ENCODE measurements at regions of chr10 and their contacts with region 1.

Region 1: DNA sequence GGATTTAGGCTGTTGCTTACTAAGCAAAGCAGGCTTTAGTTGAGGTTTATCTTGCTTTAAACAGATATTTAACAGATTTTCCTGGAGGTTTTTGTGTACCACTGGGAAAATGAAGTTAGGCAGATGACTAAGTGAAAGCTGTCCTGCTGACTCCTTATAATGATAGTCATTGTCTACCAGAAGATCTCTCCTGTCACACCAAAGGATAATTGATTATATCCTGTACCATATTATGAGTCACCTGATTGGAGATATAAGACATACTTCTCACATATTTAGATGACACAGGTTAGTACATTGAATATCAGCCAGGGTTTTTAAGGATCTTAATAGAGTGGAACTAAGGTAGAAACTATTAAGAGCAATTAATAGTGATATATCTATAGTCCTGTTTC is 68.4 kb downstream of the PTEN start:
- DNase-seq: no peak
- ATAC-seq: no peak
- H3K4me3 ChIP-seq: no peak overlapping the region
- H3K4me3 Mint-ChIP-seq: no peak overlapping the region
- H3K27ac ChIP-seq: no peak overlapping the region
- H3K27ac Mint-ChIP-seq: no peak overlapping the region
- H3K4me1 ChIP-seq: peaks cover 8 to 12% of the 10 kb centered on the region in 2 donors
- H3K4me1 Mint-ChIP-seq: peaks cover 26 to 83% (median 74%) of the 10 kb centered on the region in 7 donors
- H3K27me3 ChIP-seq: no peaks in the 10 kb centered on the region
- H3K27me3 Mint-ChIP-seq: no peaks in the 10 kb centered on the region

Region 2: GRCh38 chr10:87794285-87794684 is 137.5 kb before region 1 on chr10:
- CTCF ChIA-PET with region 1: no interaction called
- POLR2A ChIA-PET with region 1: no interaction called
- intact Hi-C with region 1: no loop called
- DNase-seq: no peak
- ATAC-seq: no peak
- H3K4me3 ChIP-seq: no peak overlapping the region
- H3K4me3 Mint-ChIP-seq: no peak overlapping the region
- H3K27ac ChIP-seq: no peak overlapping the region
- H3K27ac Mint-ChIP-seq: peak overlapping the region in 8 of 9 donors; percentile 32 to 77 (median 65)
- H3K4me1 ChIP-seq: peaks cover 0 to 15% of the 10 kb centered on the region in 2 donors
- H3K4me1 Mint-ChIP-seq: peaks cover 18 to 74% (median 62%) of the 10 kb centered on the region in 7 donors
- H3K27me3 ChIP-seq: no peaks in the 10 kb centered on the region
- H3K27me3 Mint-ChIP-seq: no peaks in the 10 kb centered on the region

Region 3: DNA sequence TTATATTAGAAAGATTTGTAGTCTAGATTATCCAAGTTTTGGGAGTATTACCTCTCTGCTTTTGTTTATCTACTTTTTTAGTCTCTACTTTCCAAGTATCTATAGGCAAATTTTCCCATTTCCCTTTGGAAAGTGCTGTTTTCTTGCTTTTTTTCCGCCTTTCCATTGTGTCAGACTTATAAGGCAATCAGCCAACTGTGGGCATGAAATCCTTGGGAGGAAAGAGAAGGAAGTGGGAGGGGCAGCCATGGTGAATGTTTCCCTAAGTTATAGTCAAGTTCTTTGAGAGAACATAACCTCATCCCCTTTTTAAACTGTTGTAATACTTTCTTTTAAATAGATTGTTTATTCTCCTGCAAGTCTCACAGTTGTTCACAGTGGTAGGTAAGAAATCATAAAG is 15.8 kb before region 1 on chr10:
- CTCF ChIA-PET with region 1: no interaction called
- POLR2A ChIA-PET with region 1: interaction called, 3 read pairs
- intact Hi-C with region 1: loop called in 1 of 2 experiments (anchors 1 kb)
- DNase-seq: no peak
- ATAC-seq: no peak
- H3K4me3 ChIP-seq: no peak overlapping the region
- H3K4me3 Mint-ChIP-seq: peak overlapping the region in 6 of 10 donors; percentile 6 to 68 (median 52)
- H3K27ac ChIP-seq: no peak overlapping the region
- H3K27ac Mint-ChIP-seq: peak overlapping the region in 2 of 9 donors; percentile 7 to 84
- H3K4me1 ChIP-seq: peaks cover 14 to 25% of the 10 kb centered on the region in 2 donors
- H3K4me1 Mint-ChIP-seq: peaks cover 35 to 74% (median 64%) of the 10 kb centered on the region in 7 donors
- H3K27me3 ChIP-seq: no peaks in the 10 kb centered on the region
- H3K27me3 Mint-ChIP-seq: no peaks in the 10 kb centered on the region

Region 4: GRCh38 chr10:87942884-87943527 is 11.2 kb after region 1 on chr10:
- CTCF ChIA-PET with region 1: no interaction called
- POLR2A ChIA-PET with region 1: no interaction called
- intact Hi-C with region 1: loop called in 1 of 2 experiments (anchors 1 kb)
- DNase-seq: no peak
- ATAC-seq: no peak
- H3K4me3 ChIP-seq: no peak overlapping the region
- H3K4me3 Mint-ChIP-seq: no peak overlapping the region
- H3K27ac ChIP-seq: no peak overlapping the region
- H3K27ac Mint-ChIP-seq: no peak overlapping the region
- H3K4me1 ChIP-seq: no peaks in the 10 kb centered on the region
- H3K4me1 Mint-ChIP-seq: peaks cover 4 to 50% (median 40%) of the 10 kb centered on the region in 7 donors
- H3K27me3 ChIP-seq: no peaks in the 10 kb centered on the region
- H3K27me3 Mint-ChIP-seq: no peaks in the 10 kb centered on the region

Region 5: DNA sequence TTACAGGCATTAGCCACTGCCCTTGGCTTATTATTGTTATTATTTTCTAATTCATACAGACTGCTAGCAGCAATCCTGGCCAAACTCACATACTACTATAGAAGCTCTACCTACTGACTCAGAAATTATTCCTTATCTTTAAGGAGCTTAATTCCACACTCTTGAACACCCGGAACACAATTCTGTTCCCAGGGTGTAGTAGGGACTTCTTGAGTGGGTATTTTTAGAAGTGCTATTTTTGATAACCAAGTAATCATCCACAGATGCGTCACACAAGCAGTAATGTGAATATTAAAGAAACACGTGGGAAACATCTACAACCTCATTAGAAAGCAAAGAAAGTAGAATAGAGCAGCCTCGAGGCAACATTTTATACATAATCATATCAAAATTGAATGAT is 80.8 kb after region 1 on chr10:
- CTCF ChIA-PET with region 1: no interaction called
- POLR2A ChIA-PET with region 1: no interaction called
- intact Hi-C with region 1: no loop called
- DNase-seq: no peak
- ATAC-seq: no peak
- H3K4me3 ChIP-seq: no peak overlapping the region
- H3K4me3 Mint-ChIP-seq: no peak overlapping the region
- H3K27ac ChIP-seq: no peak overlapping the region
- H3K27ac Mint-ChIP-seq: no peak overlapping the region
- H3K4me1 ChIP-seq: no peaks in the 10 kb centered on the region
- H3K4me1 Mint-ChIP-seq: no peaks in the 10 kb centered on the region
- H3K27me3 ChIP-seq: no peaks in the 10 kb centered on the region
- H3K27me3 Mint-ChIP-seq: peaks cover 0 to 3% (median 0%) of the 10 kb centered on the region in 5 donors

Region 6: DNA sequence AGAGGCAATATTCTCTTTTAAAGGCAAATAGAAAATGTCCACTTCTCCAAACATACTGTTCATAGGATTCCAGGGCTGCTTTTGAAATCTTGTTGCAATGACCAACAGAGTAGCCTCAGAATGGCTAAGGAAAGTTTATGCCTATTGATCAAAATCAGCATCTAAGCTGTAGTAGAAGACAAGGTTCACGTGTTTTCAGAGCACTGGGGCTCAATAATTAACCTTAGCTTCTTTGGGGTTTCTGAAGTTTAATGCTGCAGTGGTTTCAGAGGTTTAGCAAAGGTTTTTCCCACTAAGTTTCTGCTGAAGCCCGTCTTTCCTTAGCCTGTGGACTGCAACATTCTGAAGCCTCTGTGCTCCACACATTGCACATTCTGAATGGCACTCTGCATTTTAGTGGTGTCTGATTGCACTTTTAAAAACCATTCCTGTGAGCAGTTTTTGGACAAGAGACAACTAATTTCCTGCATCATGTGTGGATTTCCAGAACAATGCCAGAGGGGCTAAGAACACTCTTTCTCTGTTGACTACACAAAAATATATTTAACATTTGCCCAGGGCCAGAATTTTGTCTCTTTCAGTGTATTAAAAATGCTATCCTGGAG is 274.1 kb after region 1 on chr10:
- CTCF ChIA-PET with region 1: no interaction called
- POLR2A ChIA-PET with region 1: no interaction called
- intact Hi-C with region 1: no loop called
- DNase-seq: no peak
- ATAC-seq: no peak
- H3K4me3 ChIP-seq: no peak overlapping the region
- H3K4me3 Mint-ChIP-seq: no peak overlapping the region
- H3K27ac ChIP-seq: no peak overlapping the region
- H3K27ac Mint-ChIP-seq: no peak overlapping the region
- H3K4me1 ChIP-seq: no peaks in the 10 kb centered on the region
- H3K4me1 Mint-ChIP-seq: peaks cover 0 to 3% (median 0%) of the 10 kb centered on the region in 7 donors
- H3K27me3 ChIP-seq: peaks cover 0 to 3% of the 10 kb centered on the region in 2 donors
- H3K27me3 Mint-ChIP-seq: peaks cover 0 to 12% (median 0%) of the 10 kb centered on the region in 5 donors

Region 7: DNA sequence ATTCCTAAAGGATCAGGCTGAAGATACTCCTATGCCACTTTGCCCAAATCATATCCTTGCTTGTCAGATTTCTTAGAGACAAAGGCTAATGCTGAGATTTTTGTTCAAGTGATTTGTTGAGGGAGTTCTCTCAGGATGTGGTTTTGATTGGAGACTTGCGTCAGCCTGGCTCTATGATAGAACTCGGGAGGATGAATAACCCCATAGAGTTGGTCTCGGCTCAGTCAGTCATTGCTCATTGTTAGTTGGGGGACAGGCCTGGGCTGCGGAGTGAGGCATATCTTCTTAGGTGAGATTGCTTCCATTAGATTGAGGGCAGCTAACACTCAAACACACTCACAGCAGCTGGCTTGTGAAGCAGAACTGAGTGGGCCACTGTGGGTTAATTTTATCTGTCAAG is 1972.9 kb after region 1 on chr10:
- CTCF ChIA-PET with region 1: no interaction called
- POLR2A ChIA-PET with region 1: no interaction called
- intact Hi-C with region 1: no loop called
- DNase-seq: no peak
- ATAC-seq: no peak
- H3K4me3 ChIP-seq: no peak overlapping the region
- H3K4me3 Mint-ChIP-seq: no peak overlapping the region
- H3K27ac ChIP-seq: no peak overlapping the region
- H3K27ac Mint-ChIP-seq: no peak overlapping the region
- H3K4me1 ChIP-seq: no peaks in the 10 kb centered on the region
- H3K4me1 Mint-ChIP-seq: no peaks in the 10 kb centered on the region
- H3K27me3 ChIP-seq: peaks cover 0 to 4% of the 10 kb centered on the region in 2 donors
- H3K27me3 Mint-ChIP-seq: peaks cover 2 to 34% (median 23%) of the 10 kb centered on the region in 5 donors